Activated naive CD4-positive, alpha-beta T cell treated with anti-CD3 and anti-CD28 coated beads for 36 hours (primary cell): ENCODE measurements at regions of chr1 and their contacts with region 1.

Region 1: DNA sequence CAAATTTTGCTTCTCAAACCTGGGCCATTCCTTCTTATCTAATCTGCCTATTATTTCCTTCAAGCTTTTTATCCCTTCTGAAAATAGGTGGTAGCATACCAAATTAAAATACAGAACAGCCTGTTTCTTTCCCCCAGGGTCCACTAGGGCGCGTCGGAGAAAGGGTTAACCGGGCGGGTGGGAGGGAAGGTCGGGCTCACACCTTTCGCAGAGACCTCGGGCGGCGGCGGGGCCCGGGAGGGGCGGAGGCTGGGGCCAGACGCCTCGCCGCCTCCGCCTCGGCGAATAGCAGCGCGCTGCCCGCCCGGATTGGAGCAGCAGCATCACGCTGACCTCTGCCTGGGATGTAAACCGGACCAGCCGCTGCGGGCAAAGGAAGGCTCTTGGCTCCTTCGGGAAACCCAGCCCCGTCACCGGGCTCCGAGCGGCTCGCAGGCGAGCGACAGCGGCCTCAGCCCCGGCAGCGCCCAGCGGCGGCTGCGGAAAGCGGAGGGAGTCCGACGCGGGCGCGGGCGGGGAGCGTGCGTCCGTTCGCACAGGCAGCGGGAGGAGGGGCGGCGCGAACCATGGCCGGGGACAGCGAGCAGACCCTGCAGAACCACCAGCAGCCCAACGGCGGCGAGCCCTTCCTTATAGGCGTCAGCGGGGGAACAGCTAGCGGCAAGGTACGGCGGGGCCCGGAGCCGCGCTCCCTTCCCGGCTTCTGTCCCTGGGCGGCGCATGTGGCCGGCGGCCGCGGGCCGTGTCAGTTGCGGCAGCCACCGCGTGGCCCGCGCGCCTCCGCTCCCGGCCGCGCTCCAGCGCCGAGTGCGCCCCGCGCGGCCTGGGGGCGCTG is at the start of gene UCK2:
- DNase-seq: peak; percentile 62
- H3K4me3 Mint-ChIP-seq: peak within 1 kb of the TSS; percentile 93
- H3K27ac Mint-ChIP-seq: peak within 1 kb of the TSS; percentile 88
- H3K4me1 Mint-ChIP-seq: peaks cover 13% of the 10 kb centered on the region
- H3K27me3 Mint-ChIP-seq: peaks cover 3% of the 10 kb centered on the region
- total RNA-seq, gene UCK2: 58.8 to 61.5 TPM

Region 2: DNA sequence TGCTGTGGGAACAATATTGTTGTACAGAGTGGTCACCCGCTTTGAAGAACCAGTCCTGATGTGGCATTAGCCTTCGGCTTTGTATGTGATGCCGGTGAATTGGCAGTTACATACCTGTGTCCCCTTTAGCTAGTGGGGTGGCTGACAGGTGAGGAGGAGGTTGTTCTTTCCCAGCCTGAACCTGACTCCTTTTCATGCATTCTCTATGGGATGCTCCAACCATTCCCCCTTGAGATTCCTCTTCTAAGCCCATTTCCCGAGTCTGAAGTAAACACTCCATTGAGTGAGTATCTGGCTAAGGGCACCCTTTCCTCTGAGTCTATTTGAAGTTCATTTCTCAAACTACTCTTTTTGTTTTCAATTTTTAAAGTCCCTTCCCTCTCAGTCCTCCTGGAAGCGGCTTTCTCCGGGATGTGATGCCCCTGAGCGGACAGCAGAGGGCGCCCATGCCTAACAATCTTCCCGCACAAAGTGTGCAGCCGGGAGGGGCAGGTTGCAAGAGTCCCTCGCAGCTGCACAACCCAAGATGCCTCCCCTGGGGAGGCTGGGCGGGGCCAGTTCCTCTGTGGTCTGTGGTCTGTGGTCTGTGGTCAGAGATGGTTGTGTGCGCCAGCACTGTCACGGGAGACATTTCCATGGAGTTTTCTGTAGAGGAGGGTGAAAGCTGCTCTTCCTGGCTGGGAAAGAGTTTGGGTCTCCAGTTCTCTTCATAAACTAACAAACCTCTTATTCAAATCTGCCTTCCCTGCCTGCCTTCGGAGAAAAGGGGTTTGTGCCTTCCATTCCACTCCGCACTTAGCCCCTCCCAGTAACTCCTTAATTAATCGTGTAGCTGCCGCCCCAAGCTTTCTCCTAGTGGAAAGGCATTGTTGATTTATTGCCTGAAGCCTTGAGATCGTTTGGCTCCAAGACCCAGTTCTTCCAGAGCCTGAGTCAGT is 434.6 kb before region 1 on chr1:
- CTCF ChIA-PET with region 1: no interaction called
- intact Hi-C with region 1: loop called (anchors 10 kb)
- DNase-seq: peak; percentile 91
- H3K4me3 Mint-ChIP-seq: peak overlapping the region; percentile 52
- H3K27ac Mint-ChIP-seq: peak overlapping the region; percentile 61
- H3K4me1 Mint-ChIP-seq: peaks cover 15% of the 10 kb centered on the region
- H3K27me3 Mint-ChIP-seq: peaks cover 54% of the 10 kb centered on the region

Region 3: DNA sequence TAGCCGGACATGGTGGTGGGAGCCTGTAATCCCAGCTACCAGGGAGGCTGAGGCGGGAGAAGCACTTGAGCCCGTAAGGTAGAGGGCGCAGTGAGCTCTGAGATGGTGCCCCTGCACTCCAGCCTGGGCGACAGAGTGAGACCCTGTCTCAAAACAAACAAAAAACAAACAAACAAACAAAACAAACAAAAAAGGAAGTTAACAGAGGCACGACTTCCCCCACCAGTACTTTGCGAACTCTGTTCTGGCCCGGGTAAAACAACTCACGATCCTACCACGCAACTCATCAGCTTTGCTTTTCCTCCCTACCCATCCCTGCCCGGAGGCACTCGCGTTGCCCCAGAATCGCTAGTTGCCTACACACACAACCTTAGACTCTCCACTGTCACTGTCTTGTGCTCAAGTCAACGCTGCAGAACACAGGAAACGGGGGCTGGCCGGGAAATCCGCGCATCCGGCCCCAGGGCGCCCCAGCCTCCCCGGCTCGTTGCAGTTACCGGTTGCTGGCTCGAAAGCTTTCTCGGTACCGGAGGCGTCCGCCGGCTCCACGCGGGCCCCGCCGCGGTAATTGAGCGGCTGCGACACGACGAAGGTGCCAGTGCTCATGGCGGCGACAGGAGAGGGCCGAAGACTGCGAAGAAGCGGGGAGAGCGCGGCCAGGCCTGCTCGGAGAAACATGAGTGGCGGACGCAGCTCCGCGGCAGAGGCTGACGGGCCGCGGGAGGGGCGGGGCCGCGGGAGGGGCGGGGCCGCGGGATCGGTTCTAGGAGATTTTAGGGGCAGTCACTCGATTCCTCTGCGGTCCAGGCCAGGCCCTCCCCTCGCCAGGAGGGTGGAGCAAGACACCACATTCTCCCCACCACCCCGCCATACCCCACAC is 129.4 kb before region 1 on chr1 and contains the start of gene ALDH9A1:
- CTCF ChIA-PET with region 1: interaction called, 4 read pairs
- intact Hi-C with region 1: loop called (anchors 1 kb)
- DNase-seq: peak; percentile 89
- H3K4me3 Mint-ChIP-seq: peak within 1 kb of the TSS; percentile 97
- H3K27ac Mint-ChIP-seq: peak within 1 kb of the TSS; percentile 96
- H3K4me1 Mint-ChIP-seq: peaks cover 26% of the 10 kb centered on the region
- H3K27me3 Mint-ChIP-seq: no peaks in the 10 kb centered on the region
- total RNA-seq, gene ALDH9A1: 35.8 to 43.5 TPM

Region 4: GRCh38 chr1:165842671-165843129 is 15.2 kb after region 1 on chr1:
- CTCF ChIA-PET with region 1: interaction called, 9 read pairs
- intact Hi-C with region 1: loop called (anchors 1 kb)
- DNase-seq: peak; percentile 58
- H3K4me3 Mint-ChIP-seq: no peak overlapping the region
- H3K27ac Mint-ChIP-seq: no peak overlapping the region
- H3K4me1 Mint-ChIP-seq: peaks cover 24% of the 10 kb centered on the region
- H3K27me3 Mint-ChIP-seq: no peaks in the 10 kb centered on the region

Region 5: DNA sequence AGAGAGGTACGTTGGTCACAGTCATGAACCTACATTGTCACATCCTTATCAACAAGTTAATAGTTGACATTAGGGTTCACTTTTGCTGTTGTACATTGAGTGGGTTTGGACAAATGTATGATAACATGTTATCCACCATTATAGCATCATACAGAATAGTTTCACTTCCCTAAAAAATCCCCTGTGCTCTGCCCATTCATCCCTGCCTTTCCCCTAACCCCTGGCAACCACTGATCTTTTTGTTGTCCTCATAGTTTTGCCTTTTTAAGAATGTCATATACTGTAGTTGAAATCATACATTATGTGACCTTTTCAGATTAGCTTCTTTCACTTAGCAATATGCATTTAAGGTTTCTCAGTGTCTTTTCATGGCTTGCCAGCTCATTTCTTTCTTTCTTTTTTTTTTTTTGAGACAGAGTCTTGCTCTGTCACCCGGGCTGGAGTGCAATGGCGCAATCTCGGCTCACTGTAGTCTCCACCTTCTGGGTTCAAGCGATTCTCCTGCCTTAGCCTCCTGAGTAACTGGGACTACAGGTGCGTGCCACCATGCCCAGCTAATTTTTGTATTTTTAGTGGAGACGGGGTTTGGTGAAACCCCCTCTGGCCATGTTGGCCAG is 50.6 kb after region 1 on chr1:
- CTCF ChIA-PET with region 1: interaction called, 3 read pairs
- intact Hi-C with region 1: loop called (anchors 1 kb)
- DNase-seq: peak; percentile 31
- H3K4me3 Mint-ChIP-seq: no peak overlapping the region
- H3K27ac Mint-ChIP-seq: no peak overlapping the region
- H3K4me1 Mint-ChIP-seq: peaks cover 44% of the 10 kb centered on the region
- H3K27me3 Mint-ChIP-seq: peaks cover 1% of the 10 kb centered on the region

Region 6: GRCh38 chr1:166489670-166490436 is 662.4 kb after region 1 on chr1:
- CTCF ChIA-PET with region 1: no interaction called
- intact Hi-C with region 1: loop called (anchors 10 kb)
- DNase-seq: peak; percentile 68
- H3K4me3 Mint-ChIP-seq: no peak overlapping the region
- H3K27ac Mint-ChIP-seq: no peak overlapping the region
- H3K4me1 Mint-ChIP-seq: peaks cover 14% of the 10 kb centered on the region
- H3K27me3 Mint-ChIP-seq: no peaks in the 10 kb centered on the region